ENCODE measurements at regions of chr6 and their contacts with region 1.

Region 1: DNA sequence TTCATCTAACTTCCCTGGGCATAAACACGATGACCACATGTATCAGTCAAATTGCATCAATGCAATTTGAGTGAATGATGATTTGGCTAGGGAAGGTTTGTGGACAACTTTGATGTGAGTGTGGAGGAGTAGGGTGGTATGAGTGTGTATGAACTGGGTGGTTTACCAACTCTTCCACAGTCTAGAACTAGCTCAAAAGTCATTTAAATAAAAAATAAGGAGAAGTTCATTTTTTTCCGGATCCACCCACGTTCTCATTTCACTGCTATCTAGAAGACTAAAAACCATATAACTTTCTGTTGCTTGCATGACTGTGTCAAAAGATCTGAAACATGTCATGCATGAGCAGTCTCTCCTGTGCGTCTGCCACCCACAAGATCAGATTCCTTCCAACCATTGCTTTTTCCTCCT is 23.6 kb downstream of the SLC35D3 start:
- DNase-seq: no peak
- H3K4me3 ChIP-seq: no peak overlapping the region
- H3K27ac ChIP-seq: no peak overlapping the region
- H3K4me1 ChIP-seq: no peaks in the 10 kb centered on the region
- H3K27me3 ChIP-seq: no peaks in the 10 kb centered on the region
- CTCF ChIP-seq: no peak
- POLR2A ChIP-seq: no peak

Region 2: GRCh38 chr6:136471372-136471771 is 474.3 kb before region 1 on chr6:
- intact Hi-C with region 1: no loop called
- DNase-seq: no peak
- H3K4me3 ChIP-seq: no peak overlapping the region
- H3K27ac ChIP-seq: no peak overlapping the region
- H3K4me1 ChIP-seq: no peaks in the 10 kb centered on the region
- H3K27me3 ChIP-seq: no peaks in the 10 kb centered on the region
- CTCF ChIP-seq: no peak
- POLR2A ChIP-seq: no peak

Region 3: GRCh38 chr6:136927292-136927691 is 18.4 kb before region 1 on chr6:
- intact Hi-C with region 1: loop called (anchors 1 kb)
- DNase-seq: no peak
- H3K4me3 ChIP-seq: no peak overlapping the region
- H3K27ac ChIP-seq: no peak overlapping the region
- H3K4me1 ChIP-seq: no peaks in the 10 kb centered on the region
- H3K27me3 ChIP-seq: peaks cover 2 to 5% of the 10 kb centered on the region in 2 donors
- CTCF ChIP-seq: no peak
- POLR2A ChIP-seq: no peak

Region 4: GRCh38 chr6:136983687-136984086 is 38.0 kb after region 1 on chr6:
- intact Hi-C with region 1: loop called (anchors 1 kb)
- DNase-seq: no peak
- H3K4me3 ChIP-seq: no peak overlapping the region
- H3K27ac ChIP-seq: no peak overlapping the region
- H3K4me1 ChIP-seq: no peaks in the 10 kb centered on the region
- H3K27me3 ChIP-seq: no peaks in the 10 kb centered on the region
- CTCF ChIP-seq: no peak
- POLR2A ChIP-seq: no peak